GM10248 (cell line): ENCODE measurements at regions of chr12 and their contacts with region 1.

Region 1: GRCh38 chr12:111812881-111813741 is 28.9 kb upstream of the MAPKAPK5 start:
- DNase-seq: peak; percentile 86
- CTCF ChIP-seq: peak; percentile 74

Region 2: GRCh38 chr12:110555577-110556406 is 1257.3 kb before region 1 on chr12:
- CTCF ChIA-PET with region 1: no interaction called
- POLR2A ChIA-PET with region 1: no interaction called
- DNase-seq: no peak
- CTCF ChIP-seq: no peak

Region 3: DNA sequence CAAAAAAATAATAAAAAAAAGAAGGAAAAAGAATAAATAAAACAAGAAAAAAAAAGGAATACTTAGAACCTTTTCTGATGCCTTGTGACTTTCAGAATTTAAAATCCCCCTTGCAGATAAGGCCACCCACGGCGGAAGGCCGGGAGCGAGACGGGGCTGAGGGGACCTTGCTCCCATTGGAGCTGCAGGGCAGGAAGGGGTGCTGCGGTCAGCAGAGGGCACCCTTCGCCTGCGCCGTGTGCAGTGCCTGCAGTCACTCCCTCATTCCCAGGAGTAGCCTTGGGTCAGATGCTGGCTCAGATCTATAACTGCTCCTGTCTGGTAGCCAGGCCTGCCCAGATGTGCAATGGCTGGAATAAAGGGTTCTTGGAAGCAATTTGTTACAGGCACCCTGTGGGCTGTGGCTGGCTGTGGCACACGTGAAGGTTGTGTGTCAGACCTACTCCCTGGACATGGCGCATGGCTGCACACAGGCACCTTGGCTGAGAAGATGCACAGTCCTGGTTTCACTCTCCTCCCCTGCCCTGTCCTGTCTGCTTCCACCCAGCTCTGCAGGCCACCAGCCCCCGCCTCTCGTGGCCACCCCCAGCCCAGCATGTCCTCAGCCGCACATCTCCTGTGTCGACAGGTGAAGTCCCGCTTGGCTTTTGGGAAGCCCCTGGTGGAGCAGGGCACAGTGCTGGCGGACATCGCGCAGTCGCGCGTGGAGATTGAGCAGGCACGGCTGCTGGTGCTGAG is 59.8 kb before region 1 on chr12:
- CTCF ChIA-PET with region 1: interaction called, 53 read pairs
- POLR2A ChIA-PET with region 1: no interaction called
- DNase-seq: peak; percentile 75
- CTCF ChIP-seq: peak; percentile 66

Region 4: GRCh38 chr12:111775205-111776193 is 37.6 kb before region 1 on chr12:
- CTCF ChIA-PET with region 1: interaction called, 17 read pairs
- POLR2A ChIA-PET with region 1: no interaction called
- DNase-seq: peak; percentile 83
- CTCF ChIP-seq: no peak

Region 5: GRCh38 chr12:111799758-111800157 is 13.4 kb before region 1 on chr12:
- CTCF ChIA-PET with region 1: interaction called, 19 read pairs
- POLR2A ChIA-PET with region 1: no interaction called
- DNase-seq: no peak
- CTCF ChIP-seq: no peak

Region 6: GRCh38 chr12:112066566-112066965 is 253.5 kb after region 1 on chr12:
- CTCF ChIA-PET with region 1: no interaction called
- POLR2A ChIA-PET with region 1: no interaction called
- DNase-seq: no peak
- CTCF ChIP-seq: no peak

Region 7: GRCh38 chr12:112331886-112332285 is 518.8 kb after region 1 on chr12:
- CTCF ChIA-PET with region 1: no interaction called
- POLR2A ChIA-PET with region 1: no interaction called
- DNase-seq: no peak
- CTCF ChIP-seq: no peak